GM13977 (cell line): ENCODE measurements at regions of chr4 and their contacts with region 1.

Region 1: GRCh38 chr4:24980064-24980690 is 50.6 kb downstream of the LGI2 start:
- DNase-seq: peak; percentile 67
- CTCF ChIP-seq: peak; percentile 76

Region 2: GRCh38 chr4:24488399-24489164 is 491.6 kb before region 1 on chr4:
- in situ Hi-C with region 1: loop called (anchors 25 kb)
- DNase-seq: peak; percentile 82
- CTCF ChIP-seq: peak; percentile 85

Region 3: DNA sequence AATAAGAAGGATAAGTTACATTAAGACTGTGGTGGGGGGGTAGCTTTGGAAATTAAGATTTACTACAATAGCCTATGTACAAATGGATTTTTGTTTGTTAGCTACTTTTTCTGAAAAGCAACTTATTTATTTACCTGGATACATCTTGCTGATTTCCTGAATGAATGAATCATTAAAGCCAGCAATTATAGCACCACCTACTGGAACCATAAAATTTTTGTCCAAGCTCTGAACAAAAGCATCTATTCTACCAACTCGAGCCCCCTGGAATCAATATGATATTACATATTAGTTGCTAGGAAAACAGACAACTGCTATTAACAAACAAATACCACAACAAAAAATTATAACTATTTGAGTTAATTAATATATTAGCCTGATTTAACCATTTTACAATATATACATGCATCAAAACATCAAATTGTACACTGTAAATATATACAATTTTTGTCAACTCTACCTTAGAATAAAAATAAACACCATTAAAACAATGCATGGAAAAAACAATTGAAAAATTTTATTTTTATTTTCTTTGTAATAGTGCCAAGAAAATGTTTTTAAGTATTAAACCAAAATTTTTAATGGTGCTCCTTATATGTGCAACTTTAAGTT is 164.8 kb after region 1 on chr4:
- in situ Hi-C with region 1: no loop called
- DNase-seq: peak; percentile 31
- CTCF ChIP-seq: peak; percentile 49

Region 4: GRCh38 chr4:25367004-25367621 is 386.9 kb after region 1 on chr4:
- in situ Hi-C with region 1: loop called (anchors 25 kb)
- DNase-seq: peak; percentile 31
- CTCF ChIP-seq: peak; percentile 57